CD8-positive, alpha-beta T cell (primary cell): ENCODE measurements at regions of chr4 and their contacts with region 1.

Region 1: DNA sequence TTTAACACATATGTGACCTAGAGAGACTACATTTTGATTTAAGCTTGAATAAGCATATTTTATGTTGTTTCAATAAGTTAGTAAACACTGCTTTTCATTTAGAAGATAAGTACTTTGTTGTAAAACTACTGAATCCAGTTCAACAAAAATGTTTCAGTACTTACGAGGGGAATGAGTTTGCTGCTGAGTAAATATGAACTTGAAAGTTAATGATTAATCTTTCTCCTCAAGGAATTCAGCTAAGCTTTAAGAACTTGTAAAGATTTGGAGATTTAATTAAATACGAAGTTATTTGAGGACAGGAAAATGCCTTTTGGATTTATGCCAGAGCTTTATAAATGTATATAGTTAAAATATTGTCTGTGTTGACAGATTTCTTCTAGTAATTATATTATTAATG is 933.0 kb upstream of the LCORL start:
- DNase-seq: no peak
- ATAC-seq: no peak
- H3K4me3 ChIP-seq: no peak overlapping the region
- H3K4me3 Mint-ChIP-seq: no peak overlapping the region
- H3K27ac ChIP-seq: no peak overlapping the region
- H3K27ac Mint-ChIP-seq: no peak overlapping the region
- H3K4me1 ChIP-seq: no peaks in the 10 kb centered on the region
- H3K4me1 Mint-ChIP-seq: no peaks in the 10 kb centered on the region
- H3K27me3 ChIP-seq: no peaks in the 10 kb centered on the region
- H3K27me3 Mint-ChIP-seq: no peaks in the 10 kb centered on the region
- CTCF ChIP-seq: no peak

Region 2: DNA sequence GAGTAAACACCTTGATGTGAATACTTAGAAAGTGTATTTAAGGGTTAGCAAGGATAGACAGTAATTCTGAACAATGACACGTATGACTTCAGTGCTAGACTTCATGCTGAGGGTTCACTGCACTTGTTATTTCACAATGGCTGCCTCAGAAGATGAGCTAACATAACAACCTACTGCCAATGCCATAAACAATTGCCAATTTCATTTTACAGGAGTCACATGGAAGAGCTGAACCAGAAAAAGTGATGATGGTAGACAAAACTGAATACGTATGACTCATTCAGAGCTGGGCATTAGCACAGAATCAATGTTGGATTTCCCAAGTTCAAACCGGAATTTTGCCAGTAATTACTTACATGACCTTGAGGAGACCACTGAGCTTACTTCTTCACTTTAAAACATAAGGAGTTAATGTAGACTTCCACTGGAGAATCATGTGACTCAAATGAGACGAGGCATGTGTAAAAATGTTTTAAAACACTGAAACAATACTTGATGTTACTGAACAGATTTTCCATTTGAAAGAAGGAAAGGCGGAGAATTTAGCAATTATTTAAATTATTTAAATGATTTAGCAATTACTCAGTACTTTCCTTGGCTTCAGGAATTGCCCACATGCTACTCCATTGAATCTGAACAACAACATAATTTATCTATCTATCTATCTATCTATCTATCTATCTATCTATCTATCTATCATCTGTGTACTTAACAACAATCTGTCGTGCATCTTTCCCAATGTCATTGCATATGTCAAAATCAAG is 428.6 kb after region 1 on chr4:
- CTCF ChIA-PET with region 1: no interaction called
- POLR2A ChIA-PET with region 1: no interaction called
- intact Hi-C with region 1: no loop called
- DNase-seq: no peak
- ATAC-seq: no peak
- H3K4me3 ChIP-seq: no peak overlapping the region
- H3K4me3 Mint-ChIP-seq: no peak overlapping the region
- H3K27ac ChIP-seq: no peak overlapping the region
- H3K27ac Mint-ChIP-seq: no peak overlapping the region
- H3K4me1 ChIP-seq: no peaks in the 10 kb centered on the region
- H3K4me1 Mint-ChIP-seq: no peaks in the 10 kb centered on the region
- H3K27me3 ChIP-seq: no peaks in the 10 kb centered on the region
- H3K27me3 Mint-ChIP-seq: no peaks in the 10 kb centered on the region
- CTCF ChIP-seq: no peak

Region 3: GRCh38 chr4:19693936-19694570 is 739.5 kb after region 1 on chr4:
- CTCF ChIA-PET with region 1: no interaction called
- POLR2A ChIA-PET with region 1: no interaction called
- intact Hi-C with region 1: loop called in 1 of 2 experiments (anchors 10 kb)
- DNase-seq: no peak
- ATAC-seq: no peak
- H3K4me3 ChIP-seq: no peak overlapping the region
- H3K4me3 Mint-ChIP-seq: no peak overlapping the region
- H3K27ac ChIP-seq: no peak overlapping the region
- H3K27ac Mint-ChIP-seq: no peak overlapping the region
- H3K4me1 ChIP-seq: no peaks in the 10 kb centered on the region
- H3K4me1 Mint-ChIP-seq: no peaks in the 10 kb centered on the region
- H3K27me3 ChIP-seq: no peaks in the 10 kb centered on the region
- H3K27me3 Mint-ChIP-seq: no peaks in the 10 kb centered on the region
- CTCF ChIP-seq: no peak